B cell (primary cell): ENCODE measurements at regions of chr7 and their contacts with region 1.

Region 1: DNA sequence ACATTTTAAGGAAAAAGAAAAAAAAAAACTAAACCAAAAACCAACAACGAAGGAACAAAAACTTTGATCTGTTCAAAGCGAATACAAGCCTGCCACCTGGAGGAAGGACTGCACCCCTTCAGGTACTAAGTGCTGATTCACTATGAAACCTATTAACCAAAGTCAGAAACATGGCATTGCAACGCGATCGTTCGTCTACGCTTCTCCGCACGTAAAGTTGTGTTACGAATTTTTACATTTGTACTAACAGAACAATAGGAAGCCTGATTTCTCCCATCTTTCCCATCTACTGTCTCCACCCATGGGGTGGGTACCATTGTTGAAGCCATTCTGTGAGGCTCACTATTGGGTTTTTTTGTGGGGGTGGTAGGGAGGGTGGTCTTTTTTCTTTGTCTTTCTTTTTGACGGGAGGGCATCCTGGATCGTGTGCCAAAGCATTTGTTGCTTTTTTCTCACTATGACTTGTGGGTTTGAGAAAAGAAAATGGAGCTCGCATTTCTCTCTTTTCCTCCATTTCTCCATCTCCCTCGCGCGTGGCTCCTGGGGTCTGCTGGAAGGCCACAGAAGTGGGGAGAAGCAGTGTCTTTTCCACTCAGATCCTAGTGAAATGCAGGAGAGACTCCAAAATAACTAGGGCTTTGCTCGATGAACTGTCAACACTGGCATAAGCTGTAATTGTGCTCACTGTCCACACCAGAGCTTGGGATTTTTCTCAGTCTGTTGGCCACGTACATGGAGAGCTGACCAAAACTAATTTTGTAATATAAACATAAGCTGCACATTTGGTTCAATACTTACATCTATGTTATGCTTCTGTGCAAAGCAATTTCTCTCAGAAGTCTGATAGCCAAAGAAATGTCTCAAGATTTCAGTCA is 100.9 kb upstream of the YAE1 start:
- DNase-seq: peak; percentile 51
- ATAC-seq: no peak
- H3K4me3 ChIP-seq: no peak overlapping the region
- H3K4me3 Mint-ChIP-seq: no peak overlapping the region
- H3K27ac ChIP-seq: no peak overlapping the region
- H3K27ac Mint-ChIP-seq: no peak overlapping the region
- H3K4me1 ChIP-seq: peaks cover 3 to 6% of the 10 kb centered on the region in 2 donors
- H3K4me1 Mint-ChIP-seq: peaks cover 4% of the 10 kb centered on the region
- H3K27me3 ChIP-seq: peaks cover 0 to 3% (median 0%) of the 10 kb centered on the region in 4 experiments
- H3K27me3 Mint-ChIP-seq: peaks cover 14% of the 10 kb centered on the region
- CTCF ChIP-seq: peak; percentile 77

Region 2: GRCh38 chr7:38932509-38933168 is 532.7 kb before region 1 on chr7:
- CTCF ChIA-PET with region 1: no interaction called
- POLR2A ChIA-PET with region 1: no interaction called
- intact Hi-C with region 1: loop called (anchors 10 kb)
- DNase-seq: peak; percentile 54
- ATAC-seq: no peak
- H3K4me3 ChIP-seq: no peak overlapping the region
- H3K4me3 Mint-ChIP-seq: no peak overlapping the region
- H3K27ac ChIP-seq: no peak overlapping the region
- H3K27ac Mint-ChIP-seq: no peak overlapping the region
- H3K4me1 ChIP-seq: no peaks in the 10 kb centered on the region
- H3K4me1 Mint-ChIP-seq: peaks cover 2% of the 10 kb centered on the region
- H3K27me3 ChIP-seq: no peaks in the 10 kb centered on the region
- H3K27me3 Mint-ChIP-seq: peaks cover 6% of the 10 kb centered on the region
- CTCF ChIP-seq: peak; percentile 77

Region 3: DNA sequence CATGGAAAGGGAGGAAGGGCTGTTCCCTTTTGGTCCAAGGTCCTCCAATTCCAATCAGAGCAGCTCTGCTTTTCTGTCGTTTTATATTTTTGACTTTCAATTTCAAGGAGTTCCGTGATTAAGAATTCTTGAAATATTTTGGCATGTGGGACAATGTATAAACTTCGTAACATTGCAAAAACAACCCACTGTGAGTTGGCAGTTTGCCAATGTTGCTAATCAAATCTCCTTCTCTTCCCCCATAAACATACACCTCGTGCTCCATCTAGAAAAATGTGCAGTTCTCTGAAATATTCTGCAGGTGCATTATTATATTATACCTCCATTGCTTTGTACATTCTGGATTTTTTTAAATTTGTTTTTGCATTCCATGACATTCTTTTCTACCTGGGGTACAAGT is 437.8 kb before region 1 on chr7:
- CTCF ChIA-PET with region 1: no interaction called
- POLR2A ChIA-PET with region 1: no interaction called
- intact Hi-C with region 1: no loop called
- DNase-seq: no peak
- ATAC-seq: no peak
- H3K4me3 ChIP-seq: no peak overlapping the region
- H3K4me3 Mint-ChIP-seq: no peak overlapping the region
- H3K27ac ChIP-seq: no peak overlapping the region
- H3K27ac Mint-ChIP-seq: no peak overlapping the region
- H3K4me1 ChIP-seq: no peaks in the 10 kb centered on the region
- H3K4me1 Mint-ChIP-seq: no peaks in the 10 kb centered on the region
- H3K27me3 ChIP-seq: no peaks in the 10 kb centered on the region
- H3K27me3 Mint-ChIP-seq: peaks cover 2% of the 10 kb centered on the region
- CTCF ChIP-seq: no peak

Region 4: DNA sequence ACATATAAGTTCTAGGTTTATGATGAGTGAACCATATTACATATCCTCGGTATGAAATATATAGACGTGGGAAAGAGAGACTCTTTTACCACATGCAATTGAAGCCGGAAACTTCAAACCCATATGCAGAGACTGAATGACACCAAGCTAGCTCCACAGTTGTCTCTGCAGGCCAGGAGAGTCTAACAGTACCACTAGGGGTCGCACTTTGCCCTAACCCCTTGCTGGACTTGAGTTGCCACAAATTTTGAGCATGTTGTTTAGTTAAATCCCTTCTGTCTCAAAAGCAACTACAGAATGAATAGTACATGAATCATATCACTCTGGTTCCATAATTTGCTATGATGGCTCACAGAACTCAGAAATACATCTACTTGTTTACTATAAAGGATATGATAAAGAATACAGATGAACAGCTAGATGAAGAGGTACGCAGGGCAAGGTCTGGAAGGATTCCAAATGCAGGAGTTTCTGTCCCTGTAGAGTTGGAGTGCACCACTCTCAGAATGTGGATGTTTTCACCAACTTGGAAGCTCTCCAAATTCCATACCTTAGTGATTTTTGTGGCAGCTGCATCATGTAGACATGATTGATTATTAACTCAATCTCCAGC is 11.4 kb before region 1 on chr7:
- CTCF ChIA-PET with region 1: interaction called, 24 read pairs
- POLR2A ChIA-PET with region 1: no interaction called
- intact Hi-C with region 1: no loop called
- DNase-seq: peak; percentile 54
- ATAC-seq: peak; percentile 39
- H3K4me3 ChIP-seq: no peak overlapping the region
- H3K4me3 Mint-ChIP-seq: no peak overlapping the region
- H3K27ac ChIP-seq: no peak overlapping the region
- H3K27ac Mint-ChIP-seq: no peak overlapping the region
- H3K4me1 ChIP-seq: no peaks in the 10 kb centered on the region
- H3K4me1 Mint-ChIP-seq: no peaks in the 10 kb centered on the region
- H3K27me3 ChIP-seq: no peaks in the 10 kb centered on the region
- H3K27me3 Mint-ChIP-seq: peaks cover 6% of the 10 kb centered on the region
- CTCF ChIP-seq: peak; percentile 77

Region 5: DNA sequence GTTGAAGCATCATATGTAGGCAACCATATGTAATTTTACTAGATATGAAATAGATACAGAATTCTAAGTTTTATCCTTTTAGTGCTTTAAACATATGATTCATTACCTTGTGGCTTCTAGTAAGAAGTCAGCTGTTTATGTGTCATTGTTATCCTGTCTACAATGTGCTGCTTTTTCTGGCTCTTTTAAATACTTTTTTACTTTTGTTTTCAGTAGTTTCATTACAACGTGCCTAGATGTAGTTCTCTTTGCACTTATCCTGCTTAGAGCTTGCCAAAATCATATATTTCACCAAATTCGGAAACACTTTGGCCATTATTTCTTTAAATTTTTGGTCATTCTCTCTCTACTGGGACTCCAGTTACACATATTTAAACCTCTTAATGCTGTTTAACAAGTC is 127.3 kb after region 1 on chr7:
- CTCF ChIA-PET with region 1: no interaction called
- POLR2A ChIA-PET with region 1: no interaction called
- intact Hi-C with region 1: no loop called
- DNase-seq: no peak
- ATAC-seq: no peak
- H3K4me3 ChIP-seq: no peak overlapping the region
- H3K4me3 Mint-ChIP-seq: no peak overlapping the region
- H3K27ac ChIP-seq: no peak overlapping the region
- H3K27ac Mint-ChIP-seq: no peak overlapping the region
- H3K4me1 ChIP-seq: no peaks in the 10 kb centered on the region
- H3K4me1 Mint-ChIP-seq: peaks cover 5% of the 10 kb centered on the region
- H3K27me3 ChIP-seq: no peaks in the 10 kb centered on the region
- H3K27me3 Mint-ChIP-seq: no peaks in the 10 kb centered on the region
- CTCF ChIP-seq: no peak